CD4-positive, alpha-beta memory T cell (primary cell): ENCODE measurements at regions of chr4 and their contacts with region 1.

Region 1: GRCh38 chr4:77052352-77052751 is 23.4 kb downstream of the CCNI start:
- DNase-seq: peak in 4 of 5 donors; percentile 38 to 59 (median 42)
- H3K4me3 ChIP-seq: no peak overlapping the region
- H3K4me3 Mint-ChIP-seq: no peak overlapping the region
- H3K27ac ChIP-seq: no peak overlapping the region
- H3K27ac Mint-ChIP-seq: peak overlapping the region in 6 of 7 donors; percentile 61 to 70 (median 68)
- H3K4me1 ChIP-seq: no peaks in the 10 kb centered on the region
- H3K4me1 Mint-ChIP-seq: peaks cover 0 to 15% (median 5%) of the 10 kb centered on the region in 4 donors
- H3K27me3 ChIP-seq: no peaks in the 10 kb centered on the region
- H3K27me3 Mint-ChIP-seq: no peaks in the 10 kb centered on the region

Region 2: GRCh38 chr4:77015390-77015789 is 37.0 kb before region 1 on chr4:
- CTCF ChIA-PET with region 1: no interaction called
- POLR2A ChIA-PET with region 1: no interaction called
- intact Hi-C with region 1: no loop called
- DNase-seq: no peak
- H3K4me3 ChIP-seq: no peak overlapping the region
- H3K4me3 Mint-ChIP-seq: no peak overlapping the region
- H3K27ac ChIP-seq: no peak overlapping the region
- H3K27ac Mint-ChIP-seq: no peak overlapping the region
- H3K4me1 ChIP-seq: no peaks in the 10 kb centered on the region
- H3K4me1 Mint-ChIP-seq: peaks cover 9 to 34% (median 28%) of the 10 kb centered on the region in 4 donors
- H3K27me3 ChIP-seq: no peaks in the 10 kb centered on the region
- H3K27me3 Mint-ChIP-seq: no peaks in the 10 kb centered on the region

Region 3: GRCh38 chr4:77065382-77065781 is 13.0 kb after region 1 on chr4:
- CTCF ChIA-PET with region 1: interaction called, 14 read pairs
- POLR2A ChIA-PET with region 1: no interaction called
- intact Hi-C with region 1: no loop called
- DNase-seq: no peak
- H3K4me3 ChIP-seq: no peak overlapping the region
- H3K4me3 Mint-ChIP-seq: no peak overlapping the region
- H3K27ac ChIP-seq: no peak overlapping the region
- H3K27ac Mint-ChIP-seq: peak overlapping the region in 2 of 7 donors; percentile 38 to 46
- H3K4me1 ChIP-seq: peaks cover 41% of the 10 kb centered on the region
- H3K4me1 Mint-ChIP-seq: peaks cover 16 to 48% (median 25%) of the 10 kb centered on the region in 4 donors
- H3K27me3 ChIP-seq: no peaks in the 10 kb centered on the region
- H3K27me3 Mint-ChIP-seq: no peaks in the 10 kb centered on the region

Region 4: DNA sequence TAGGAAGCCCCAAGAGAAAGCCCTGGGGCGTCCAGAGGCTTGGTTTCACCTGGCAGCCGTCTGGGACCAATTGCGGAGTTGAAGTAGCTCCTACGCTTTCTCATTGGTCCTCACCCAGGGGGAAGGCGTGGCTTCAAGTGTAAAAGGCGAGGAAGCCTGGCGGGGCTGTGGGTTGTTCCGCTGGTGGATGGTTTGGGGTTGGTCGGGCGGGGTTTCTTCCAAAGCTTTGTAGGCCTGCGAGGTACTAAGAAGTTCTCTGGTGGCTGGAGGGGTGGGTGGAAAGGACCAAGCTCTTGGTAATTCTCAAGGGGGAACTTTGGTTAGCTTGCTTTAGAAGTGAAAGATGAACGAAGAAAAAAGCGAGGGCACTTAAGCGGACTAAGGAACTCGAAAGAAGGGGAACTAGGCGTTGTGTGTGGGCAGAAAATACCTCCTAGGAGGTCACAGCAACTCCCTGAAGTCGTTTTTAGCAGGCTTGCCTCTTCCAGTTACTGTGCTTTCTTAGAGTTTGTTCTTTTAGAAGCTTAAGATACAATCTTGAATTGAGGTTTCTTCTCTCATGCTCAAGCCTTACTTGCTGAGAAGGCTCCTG is 141.3 kb after region 1 on chr4:
- CTCF ChIA-PET with region 1: interaction called, 75 read pairs
- POLR2A ChIA-PET with region 1: no interaction called
- intact Hi-C with region 1: no loop called
- DNase-seq: peak; percentile 69 to 80 (median 70)
- H3K4me3 ChIP-seq: peak overlapping the region in 1 of 2 donors; percentile 41
- H3K4me3 Mint-ChIP-seq: peak overlapping the region; percentile 87 to 96 (median 91)
- H3K27ac ChIP-seq: peak overlapping the region; percentile 8
- H3K27ac Mint-ChIP-seq: peak overlapping the region; percentile 75 to 95 (median 90)
- H3K4me1 ChIP-seq: peaks cover 14% of the 10 kb centered on the region
- H3K4me1 Mint-ChIP-seq: peaks cover 12 to 19% (median 15%) of the 10 kb centered on the region in 4 donors
- H3K27me3 ChIP-seq: no peaks in the 10 kb centered on the region
- H3K27me3 Mint-ChIP-seq: peaks cover 0 to 2% of the 10 kb centered on the region in 2 donors

Region 5: GRCh38 chr4:77232653-77233052 is 180.3 kb after region 1 on chr4:
- CTCF ChIA-PET with region 1: no interaction called
- POLR2A ChIA-PET with region 1: no interaction called
- intact Hi-C with region 1: no loop called
- DNase-seq: no peak
- H3K4me3 ChIP-seq: no peak overlapping the region
- H3K4me3 Mint-ChIP-seq: no peak overlapping the region
- H3K27ac ChIP-seq: no peak overlapping the region
- H3K27ac Mint-ChIP-seq: no peak overlapping the region
- H3K4me1 ChIP-seq: no peaks in the 10 kb centered on the region
- H3K4me1 Mint-ChIP-seq: no peaks in the 10 kb centered on the region
- H3K27me3 ChIP-seq: no peaks in the 10 kb centered on the region
- H3K27me3 Mint-ChIP-seq: peaks cover 4 to 11% of the 10 kb centered on the region in 2 donors